Colonic mucosa (tissue), 4 donors: ENCODE measurements at regions of chr10 and their contacts with region 1.

Region 1: GRCh38 chr10:31947144-31947926 is 18.7 kb upstream of the ARHGAP12 start:
- DNase-seq: peak; percentile 69
- H3K4me3 ChIP-seq: no peak overlapping the region
- H3K27ac ChIP-seq: peak overlapping the region; percentile 15
- H3K4me1 ChIP-seq: peaks cover 10% of the 10 kb centered on the region
- H3K27me3 ChIP-seq: no peaks in the 10 kb centered on the region
- CTCF ChIP-seq: peak; percentile 40

Region 2: DNA sequence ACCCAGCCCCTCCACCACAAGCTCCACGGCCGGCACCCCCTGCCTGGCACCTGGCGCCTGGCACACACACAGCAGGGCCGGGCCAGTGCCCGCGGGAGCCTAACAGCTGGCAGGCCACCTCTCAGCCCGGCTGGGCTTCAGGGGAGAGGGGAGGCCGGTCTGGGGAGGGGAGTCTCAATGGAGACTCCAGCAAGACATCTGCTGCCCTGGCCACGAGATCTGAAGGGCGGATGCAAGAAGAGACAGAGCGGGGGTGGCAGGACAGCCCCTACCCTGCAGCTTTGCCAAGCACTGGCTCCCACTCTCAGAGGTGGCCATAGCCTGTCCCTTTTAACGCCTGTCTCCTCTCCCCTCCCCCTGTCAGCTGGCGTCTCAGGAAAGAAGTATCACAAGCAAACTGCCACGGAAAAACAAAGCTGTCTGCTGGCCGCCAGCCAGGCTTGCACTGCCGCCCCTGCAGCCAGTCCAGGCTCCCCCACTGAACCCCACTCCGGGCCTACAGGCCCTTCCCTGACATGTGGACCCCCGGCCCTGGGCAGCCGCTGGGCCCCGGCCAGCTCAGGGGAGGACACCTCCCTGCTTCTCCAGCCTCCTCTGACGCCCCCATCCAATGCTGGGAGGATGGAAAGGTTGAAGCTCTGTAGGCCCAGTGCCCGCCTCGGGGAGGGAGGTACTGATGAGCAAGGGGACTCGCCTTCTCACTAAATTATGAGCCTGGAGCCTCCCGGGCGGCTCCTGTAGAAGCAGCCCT is 197.2 kb before region 1 on chr10:
- intact Hi-C with region 1: no loop called
- DNase-seq: peak; percentile 42
- H3K4me3 ChIP-seq: no peak overlapping the region
- H3K27ac ChIP-seq: no peak overlapping the region
- H3K4me1 ChIP-seq: no peaks in the 10 kb centered on the region
- H3K27me3 ChIP-seq: no peaks in the 10 kb centered on the region
- CTCF ChIP-seq: no peak

Region 3: GRCh38 chr10:31789557-31789956 is 157.8 kb before region 1 on chr10:
- intact Hi-C with region 1: no loop called
- DNase-seq: no peak
- H3K4me3 ChIP-seq: no peak overlapping the region
- H3K27ac ChIP-seq: no peak overlapping the region
- H3K4me1 ChIP-seq: no peaks in the 10 kb centered on the region
- H3K27me3 ChIP-seq: no peaks in the 10 kb centered on the region
- CTCF ChIP-seq: no peak

Region 4: GRCh38 chr10:31864834-31865518 is 82.4 kb before region 1 on chr10:
- intact Hi-C with region 1: loop called (anchors 5 kb)
- DNase-seq: no peak
- H3K4me3 ChIP-seq: no peak overlapping the region
- H3K27ac ChIP-seq: peak overlapping the region; percentile 54
- H3K4me1 ChIP-seq: peaks cover 3% of the 10 kb centered on the region
- H3K27me3 ChIP-seq: no peaks in the 10 kb centered on the region
- CTCF ChIP-seq: no peak

Region 5: DNA sequence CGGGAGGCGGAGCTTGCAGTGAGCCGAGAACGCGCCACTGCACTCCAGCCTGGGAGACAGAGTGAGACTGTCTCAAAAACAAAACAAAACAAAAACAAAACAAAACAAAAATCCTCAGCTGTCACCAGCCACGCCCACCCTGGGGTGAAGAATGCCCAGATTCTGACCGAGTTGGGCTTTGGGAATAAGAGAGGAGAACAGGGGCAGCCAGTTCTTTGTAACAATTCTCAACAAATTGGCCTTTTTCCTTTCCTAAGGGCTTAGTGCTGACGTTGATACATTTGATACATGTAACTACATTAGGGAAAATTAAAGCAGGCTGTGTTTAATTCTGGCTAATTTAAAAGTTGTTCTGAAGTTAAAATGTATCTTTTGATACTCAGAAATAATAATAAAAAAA is 278.6 kb after region 1 on chr10:
- intact Hi-C with region 1: no loop called
- DNase-seq: no peak
- H3K4me3 ChIP-seq: no peak overlapping the region
- H3K27ac ChIP-seq: no peak overlapping the region
- H3K4me1 ChIP-seq: no peaks in the 10 kb centered on the region
- H3K27me3 ChIP-seq: no peaks in the 10 kb centered on the region
- CTCF ChIP-seq: no peak